Activated naive CD4-positive, alpha-beta T cell treated with anti-CD3 and anti-CD28 coated beads for 36 hours (primary cell): ENCODE measurements at regions of chr21 and their contacts with region 1.

Region 1: GRCh38 chr21:37711836-37712568 is 204.3 kb downstream of the KCNJ6 start:
- DNase-seq: peak; percentile 74
- H3K4me3 Mint-ChIP-seq: no peak overlapping the region
- H3K27ac Mint-ChIP-seq: no peak overlapping the region
- H3K4me1 Mint-ChIP-seq: no peaks in the 10 kb centered on the region
- H3K27me3 Mint-ChIP-seq: peaks cover 29% of the 10 kb centered on the region

Region 2: GRCh38 chr21:37593015-37593414 is 119.0 kb before region 1 on chr21:
- CTCF ChIA-PET with region 1: no interaction called
- intact Hi-C with region 1: no loop called
- DNase-seq: peak; percentile 7
- H3K4me3 Mint-ChIP-seq: no peak overlapping the region
- H3K27ac Mint-ChIP-seq: no peak overlapping the region
- H3K4me1 Mint-ChIP-seq: no peaks in the 10 kb centered on the region
- H3K27me3 Mint-ChIP-seq: no peaks in the 10 kb centered on the region

Region 3: GRCh38 chr21:37916310-37917051 is 204.5 kb after region 1 on chr21 and contains the start of gene KCNJ6:
- CTCF ChIA-PET with region 1: no interaction called
- intact Hi-C with region 1: loop called (anchors 2 kb)
- DNase-seq: peak; percentile 24
- H3K4me3 Mint-ChIP-seq: no peak within 1 kb of the TSS
- H3K27ac Mint-ChIP-seq: no peak within 1 kb of the TSS
- H3K4me1 Mint-ChIP-seq: peaks cover 10% of the 10 kb centered on the region
- H3K27me3 Mint-ChIP-seq: peaks cover 59% of the 10 kb centered on the region
- total RNA-seq, gene KCNJ6: not detected

Region 4: GRCh38 chr21:38126669-38127303 is 414.8 kb after region 1 on chr21:
- CTCF ChIA-PET with region 1: interaction called, 15 read pairs
- intact Hi-C with region 1: loop called (anchors 1 kb)
- DNase-seq: peak; percentile 72
- H3K4me3 Mint-ChIP-seq: no peak overlapping the region
- H3K27ac Mint-ChIP-seq: no peak overlapping the region
- H3K4me1 Mint-ChIP-seq: no peaks in the 10 kb centered on the region
- H3K27me3 Mint-ChIP-seq: peaks cover 10% of the 10 kb centered on the region